ENCODE measurements at regions of chr2 and their contacts with region 1.

Region 1: GRCh38 chr2:137220438-137220993 is 455.2 kb downstream of the THSD7B start:
- DNase-seq: no peak
- ATAC-seq: peak; percentile 50
- H3K4me3 ChIP-seq: no peak overlapping the region
- H3K27ac ChIP-seq: no peak overlapping the region
- H3K4me1 ChIP-seq: no peaks in the 10 kb centered on the region
- H3K27me3 ChIP-seq: no peaks in the 10 kb centered on the region
- CTCF ChIP-seq: no peak
- EP300 ChIP-seq: no peak
- POLR2A ChIP-seq: no peak
- RAD21 ChIP-seq: no peak

Region 2: GRCh38 chr2:136932700-136933099 is 287.8 kb before region 1 on chr2:
- CTCF ChIA-PET with region 1: no interaction called
- POLR2A ChIA-PET with region 1: no interaction called
- RAD21 ChIA-PET with region 1: interaction called, 3 read pairs
- SMC1A ChIA-PET with region 1: interaction called, 4 read pairs
- in situ Hi-C with region 1: no loop called
- intact Hi-C with region 1: loop called (anchors 5 kb)
- DNase-seq: no peak
- ATAC-seq: peak; percentile 80
- H3K4me3 ChIP-seq: no peak overlapping the region
- H3K27ac ChIP-seq: no peak overlapping the region
- H3K4me1 ChIP-seq: no peaks in the 10 kb centered on the region
- H3K27me3 ChIP-seq: no peaks in the 10 kb centered on the region
- CTCF ChIP-seq: peak; percentile 41 to 60 (median 51); a peak in 5 of 6 replicates
- EP300 ChIP-seq: no peak
- POLR2A ChIP-seq: no peak
- RAD21 ChIP-seq: peak; percentile 59

Region 3: GRCh38 chr2:137202318-137202717 is 18.2 kb before region 1 on chr2:
- CTCF ChIA-PET with region 1: interaction called, 6 read pairs
- POLR2A ChIA-PET with region 1: interaction called, 8 read pairs
- RAD21 ChIA-PET with region 1: interaction called, 23 read pairs
- SMC1A ChIA-PET with region 1: interaction called, 12 read pairs
- in situ Hi-C with region 1: no loop called
- intact Hi-C with region 1: no loop called
- DNase-seq: no peak
- ATAC-seq: peak; percentile 63
- H3K4me3 ChIP-seq: no peak overlapping the region
- H3K27ac ChIP-seq: no peak overlapping the region
- H3K4me1 ChIP-seq: no peaks in the 10 kb centered on the region
- H3K27me3 ChIP-seq: no peaks in the 10 kb centered on the region
- CTCF ChIP-seq: no peak
- EP300 ChIP-seq: no peak
- POLR2A ChIP-seq: no peak
- RAD21 ChIP-seq: no peak

Region 4: GRCh38 chr2:137208431-137208891 is 12.1 kb before region 1 on chr2:
- CTCF ChIA-PET with region 1: interaction called, 6 read pairs
- POLR2A ChIA-PET with region 1: interaction called, 8 read pairs
- RAD21 ChIA-PET with region 1: interaction called, 23 read pairs
- SMC1A ChIA-PET with region 1: interaction called, 31 read pairs
- in situ Hi-C with region 1: no loop called
- intact Hi-C with region 1: no loop called
- DNase-seq: no peak
- ATAC-seq: peak; percentile 25
- H3K4me3 ChIP-seq: no peak overlapping the region
- H3K27ac ChIP-seq: no peak overlapping the region
- H3K4me1 ChIP-seq: no peaks in the 10 kb centered on the region
- H3K27me3 ChIP-seq: no peaks in the 10 kb centered on the region
- CTCF ChIP-seq: no peak
- EP300 ChIP-seq: no peak
- POLR2A ChIP-seq: no peak
- RAD21 ChIP-seq: no peak

Region 5: GRCh38 chr2:137237055-137237454 is 16.5 kb after region 1 on chr2:
- CTCF ChIA-PET with region 1: interaction called, 7 read pairs
- POLR2A ChIA-PET with region 1: no interaction called
- RAD21 ChIA-PET with region 1: interaction called, 4 read pairs
- SMC1A ChIA-PET with region 1: interaction called, 13 read pairs
- in situ Hi-C with region 1: no loop called
- intact Hi-C with region 1: no loop called
- DNase-seq: no peak
- ATAC-seq: no peak
- H3K4me3 ChIP-seq: no peak overlapping the region
- H3K27ac ChIP-seq: no peak overlapping the region
- H3K4me1 ChIP-seq: no peaks in the 10 kb centered on the region
- H3K27me3 ChIP-seq: no peaks in the 10 kb centered on the region
- CTCF ChIP-seq: no peak
- EP300 ChIP-seq: no peak
- POLR2A ChIP-seq: no peak
- RAD21 ChIP-seq: no peak

Region 6: GRCh38 chr2:137291836-137292570 is 71.5 kb after region 1 on chr2:
- CTCF ChIA-PET with region 1: no interaction called
- POLR2A ChIA-PET with region 1: interaction called, 3 read pairs
- RAD21 ChIA-PET with region 1: interaction called, 3 read pairs
- SMC1A ChIA-PET with region 1: interaction called, 4 read pairs
- in situ Hi-C with region 1: no loop called
- intact Hi-C with region 1: loop called (anchors 5 kb)
- DNase-seq: no peak
- ATAC-seq: peak; percentile 67
- H3K4me3 ChIP-seq: no peak overlapping the region
- H3K27ac ChIP-seq: no peak overlapping the region
- H3K4me1 ChIP-seq: no peaks in the 10 kb centered on the region
- H3K27me3 ChIP-seq: no peaks in the 10 kb centered on the region
- CTCF ChIP-seq: no peak
- EP300 ChIP-seq: no peak
- POLR2A ChIP-seq: no peak
- RAD21 ChIP-seq: no peak

Region 7: GRCh38 chr2:137333386-137334165 is 113.1 kb after region 1 on chr2:
- CTCF ChIA-PET with region 1: no interaction called
- POLR2A ChIA-PET with region 1: no interaction called
- RAD21 ChIA-PET with region 1: no interaction called
- SMC1A ChIA-PET with region 1: no interaction called
- in situ Hi-C with region 1: no loop called
- intact Hi-C with region 1: no loop called
- DNase-seq: peak; percentile 1
- ATAC-seq: peak; percentile 92
- H3K4me3 ChIP-seq: no peak overlapping the region
- H3K27ac ChIP-seq: no peak overlapping the region
- H3K4me1 ChIP-seq: no peaks in the 10 kb centered on the region
- H3K27me3 ChIP-seq: no peaks in the 10 kb centered on the region
- CTCF ChIP-seq: no peak
- EP300 ChIP-seq: no peak
- POLR2A ChIP-seq: no peak
- RAD21 ChIP-seq: no peak

Measured in GM12878 (cell line).